PC-3 (cell line): ENCODE measurements at regions of chrX and their contacts with region 1.

Region 1: DNA sequence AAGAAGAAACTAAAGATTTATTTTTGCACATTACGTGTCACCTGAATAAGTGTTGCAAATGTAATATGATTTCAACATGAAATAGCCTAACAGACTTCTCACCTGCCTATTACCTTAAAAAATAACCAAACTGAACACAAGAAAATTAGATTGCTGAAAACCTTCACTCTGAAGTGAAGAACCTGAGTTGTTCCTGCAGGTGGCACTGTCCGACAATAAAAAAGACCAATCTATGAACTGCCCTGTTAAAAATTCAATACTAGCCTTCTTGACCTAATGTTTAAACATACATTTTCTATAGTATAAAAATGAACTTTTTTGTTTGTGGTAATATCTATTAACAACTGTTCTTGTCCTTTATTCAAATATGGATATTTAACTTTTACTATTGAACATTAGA is 69.2 kb upstream of the PNPLA4 start:
- DNase-seq: peak; percentile 65
- ATAC-seq: peak; percentile 60
- H3K4me3 ChIP-seq: no peak overlapping the region
- H3K27ac ChIP-seq: no peak overlapping the region
- H3K4me1 ChIP-seq: 0 out of 2 replicates have a peak, but pooled peaks cover 5% of the 10 kb centered on the region
- H3K27me3 ChIP-seq: no peaks in the 10 kb centered on the region
- CTCF ChIP-seq: peak; percentile 71

Region 2: DNA sequence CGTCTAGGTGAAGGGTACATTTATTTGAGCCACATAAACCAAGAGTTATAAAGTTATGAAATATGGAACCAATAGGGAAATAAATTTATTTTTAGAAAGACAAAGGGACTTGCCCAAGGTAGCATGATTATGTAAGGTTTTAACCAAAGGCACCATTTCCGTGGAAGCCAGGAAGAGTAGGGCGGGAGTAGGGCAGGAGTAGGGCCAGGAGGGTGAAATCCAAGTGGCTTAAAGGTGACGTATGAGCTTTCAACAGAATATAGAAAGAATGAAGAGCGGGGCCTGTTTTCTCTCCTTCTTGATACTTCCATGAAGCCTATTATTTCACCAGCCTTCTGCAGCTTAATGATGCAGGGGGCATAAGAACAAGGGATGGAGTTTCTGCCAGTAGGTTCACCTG is 22.5 kb after region 1 on chrX:
- CTCF ChIA-PET with region 1: no interaction called
- POLR2A ChIA-PET with region 1: no interaction called
- intact Hi-C with region 1: no loop called
- DNase-seq: no peak
- ATAC-seq: no peak
- H3K4me3 ChIP-seq: no peak overlapping the region
- H3K27ac ChIP-seq: no peak overlapping the region
- H3K4me1 ChIP-seq: no peaks in the 10 kb centered on the region
- H3K27me3 ChIP-seq: no peaks in the 10 kb centered on the region
- CTCF ChIP-seq: no peak

Region 3: DNA sequence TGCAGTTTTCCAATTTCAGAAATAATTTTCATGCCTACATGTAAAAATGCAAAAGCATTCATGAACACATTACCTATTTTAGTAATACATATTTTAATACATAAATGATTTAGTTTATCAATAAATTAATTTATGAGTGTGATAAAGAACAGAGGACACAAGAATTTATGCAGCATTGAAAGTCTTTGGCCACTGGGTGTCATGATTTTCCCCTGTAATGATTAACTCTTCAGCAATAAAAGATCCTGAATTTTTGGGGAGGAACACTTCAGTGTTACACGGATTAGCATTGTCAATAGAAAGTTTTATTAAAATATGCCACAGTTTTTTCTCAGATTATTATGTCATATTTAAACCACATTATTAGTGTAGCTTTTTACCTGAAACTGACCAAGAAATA is 183.2 kb after region 1 on chrX:
- CTCF ChIA-PET with region 1: no interaction called
- POLR2A ChIA-PET with region 1: no interaction called
- intact Hi-C with region 1: loop called (anchors 2 kb)
- DNase-seq: peak; percentile 49
- ATAC-seq: no peak
- H3K4me3 ChIP-seq: no peak overlapping the region
- H3K27ac ChIP-seq: no peak overlapping the region
- H3K4me1 ChIP-seq: no peaks in the 10 kb centered on the region
- H3K27me3 ChIP-seq: no peaks in the 10 kb centered on the region
- CTCF ChIP-seq: peak; percentile 43; the same call in 1 of the 2 replicates

Region 4: DNA sequence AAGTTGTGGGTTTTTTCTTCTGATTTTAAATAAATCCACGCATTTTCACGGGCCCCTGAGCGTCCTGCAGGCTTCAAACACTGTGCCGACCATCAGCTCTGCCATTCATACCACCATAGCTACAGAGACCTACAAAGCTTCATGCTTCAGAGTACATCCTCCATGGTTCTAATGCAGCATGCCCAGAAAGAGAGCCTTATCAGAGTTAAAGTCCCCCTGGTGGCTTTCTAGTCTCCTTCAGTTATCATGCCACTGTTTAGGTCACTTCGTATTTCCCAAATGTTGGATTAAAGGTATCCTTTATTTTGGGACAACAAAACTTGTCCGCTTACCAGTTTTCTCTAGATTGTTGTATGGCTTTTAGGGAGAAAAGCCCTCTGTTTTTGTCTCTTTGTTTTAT is 241.3 kb after region 1 on chrX:
- CTCF ChIA-PET with region 1: no interaction called
- POLR2A ChIA-PET with region 1: no interaction called
- intact Hi-C with region 1: loop called (anchors 1 kb)
- DNase-seq: peak; percentile 6
- ATAC-seq: peak; percentile 35; the same call in 1 of the 2 replicates
- H3K4me3 ChIP-seq: no peak overlapping the region
- H3K27ac ChIP-seq: no peak overlapping the region
- H3K4me1 ChIP-seq: no peaks in the 10 kb centered on the region
- H3K27me3 ChIP-seq: no peaks in the 10 kb centered on the region
- CTCF ChIP-seq: peak; percentile 29; the same call in 1 of the 2 replicates

Region 5: GRCh38 chrX:8364369-8365141 is 368.1 kb after region 1 on chrX:
- CTCF ChIA-PET with region 1: no interaction called
- POLR2A ChIA-PET with region 1: no interaction called
- intact Hi-C with region 1: loop called (anchors 5 kb)
- DNase-seq: peak; percentile 63
- ATAC-seq: peak; percentile 54; the same call in 1 of the 2 replicates
- H3K4me3 ChIP-seq: no peak overlapping the region
- H3K27ac ChIP-seq: no peak overlapping the region
- H3K4me1 ChIP-seq: no peaks in the 10 kb centered on the region
- H3K27me3 ChIP-seq: no peaks in the 10 kb centered on the region
- CTCF ChIP-seq: peak; percentile 83